ENCODE measurements at regions of chrX and their contacts with region 1.

Region 1: GRCh38 chrX:129540068-129540653 is at the start of gene OCRL:
- DNase-seq: peak; percentile 51
- ATAC-seq: peak; percentile 94
- H3K4me3 ChIP-seq: peak within 1 kb of the TSS; percentile 72 to 75 (median 73)
- H3K27ac ChIP-seq: peak within 1 kb of the TSS; percentile 84
- H3K4me1 ChIP-seq: peaks cover 26% of the 10 kb centered on the region
- H3K27me3 ChIP-seq: no peaks in the 10 kb centered on the region
- CTCF ChIP-seq: peak; percentile 76
- EP300 ChIP-seq: no peak
- POLR2A ChIP-seq: peak in 1 of 2 experiments; percentile 29; a peak in 1 of 4 replicates
- RAD21 ChIP-seq: peak; percentile 44
- total RNA-seq, gene OCRL: 13.4 and 16.1 TPM in 2 replicates

Region 2: DNA sequence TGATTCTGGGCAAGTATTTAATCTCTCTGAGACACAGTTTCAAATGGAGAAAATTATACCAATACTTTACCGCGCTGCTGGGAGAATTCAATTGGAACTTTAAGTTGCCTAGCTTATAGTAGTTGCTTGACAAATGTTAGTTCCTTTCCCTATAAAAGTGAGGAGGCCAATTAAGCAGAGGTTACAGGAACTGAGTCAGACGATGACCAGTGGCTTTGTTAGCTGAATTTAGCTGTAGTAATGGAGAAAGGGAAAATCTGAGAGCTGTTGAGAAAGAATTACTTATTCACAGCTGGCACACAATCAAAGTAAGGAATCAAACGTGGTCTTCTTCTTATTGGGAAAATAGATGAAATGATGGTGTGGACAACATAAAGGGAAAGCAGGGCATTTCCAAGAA is 46.5 kb before region 1 on chrX:
- CTCF ChIA-PET with region 1: no interaction called
- POLR2A ChIA-PET with region 1: no interaction called
- in situ Hi-C with region 1: no loop called
- intact Hi-C with region 1: loop called (anchors 10 kb)
- DNase-seq: no peak
- ATAC-seq: no peak
- H3K4me3 ChIP-seq: no peak overlapping the region
- H3K27ac ChIP-seq: no peak overlapping the region
- H3K4me1 ChIP-seq: no peaks in the 10 kb centered on the region
- H3K27me3 ChIP-seq: no peaks in the 10 kb centered on the region
- CTCF ChIP-seq: no peak
- EP300 ChIP-seq: no peak
- POLR2A ChIP-seq: no peak
- RAD21 ChIP-seq: no peak

Measured in HepG2 (cell line).